ENCODE measurements at regions of chr1 and their contacts with region 1.

Region 1: GRCh38 chr1:154936555-154937084 is at the start of gene PMVK:
- DNase-seq: peak; percentile 92 to 97 (median 96)
- H3K4me3 ChIP-seq: peak within 1 kb of the TSS; percentile 57 to 100 (median 83)
- H3K27ac ChIP-seq: peak within 1 kb of the TSS; percentile 74 to 100 (median 99)
- H3K27me3 ChIP-seq: no peaks in the 10 kb centered on the region
- CTCF ChIP-seq: peak in 53 of 56 donors; percentile 25 to 73 (median 53)
- total RNA-seq, gene PMVK: 28.0 to 64.2 (median 44.6) TPM

Region 2: DNA sequence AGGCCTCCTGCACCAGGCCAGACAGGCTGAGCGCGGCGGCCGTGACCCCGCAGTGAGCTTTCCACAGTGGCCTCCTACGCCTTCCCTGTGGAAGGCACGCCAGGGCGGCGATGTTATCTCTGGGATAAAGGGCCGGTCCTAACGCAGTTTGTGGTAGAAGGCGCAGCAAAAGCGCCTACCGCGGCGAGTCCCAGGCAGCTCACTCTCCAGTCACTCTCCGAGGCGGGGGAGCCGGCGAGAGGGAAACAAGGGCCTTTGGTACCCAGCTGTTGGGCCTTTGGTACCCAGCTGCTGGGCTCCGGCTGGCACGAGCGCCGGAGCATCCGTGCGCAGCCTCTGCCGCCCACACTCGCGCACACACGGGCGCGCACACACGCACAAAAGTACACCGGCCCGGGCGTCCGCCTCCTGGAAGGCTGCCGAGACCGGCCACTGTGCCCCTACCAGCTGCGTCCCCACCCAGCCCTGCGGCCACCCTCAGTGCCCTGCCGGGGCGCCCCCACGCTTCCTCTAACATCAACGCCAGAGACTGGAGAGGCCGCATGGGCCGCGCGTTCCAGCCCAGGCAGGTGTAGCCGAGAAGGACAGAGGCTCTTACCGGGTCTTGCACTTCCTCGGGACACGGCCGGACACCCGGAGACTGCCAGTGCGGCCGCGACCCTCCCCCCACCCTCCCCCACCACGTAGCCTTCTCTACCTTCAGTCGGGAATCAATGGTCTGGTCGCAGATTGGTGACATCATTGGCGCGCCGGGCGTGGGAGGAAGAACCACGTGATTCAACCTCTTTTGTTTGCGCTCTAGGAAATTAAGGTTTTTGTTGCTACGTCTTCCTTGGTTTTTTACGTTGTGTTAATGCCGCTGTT is 309.1 kb before region 1 on chr1:
- intact Hi-C with region 1: loop called in 1 of 2 experiments (anchors 5 kb)
- DNase-seq: peak; percentile 77 to 92 (median 86)
- H3K4me3 ChIP-seq: peak overlapping the region; percentile 47 to 99 (median 95)
- H3K27ac ChIP-seq: peak overlapping the region; percentile 42 to 98 (median 91)
- H3K27me3 ChIP-seq: no peaks in the 10 kb centered on the region
- CTCF ChIP-seq: peak in 32 of 56 donors; percentile 3 to 55 (median 28)

Region 3: GRCh38 chr1:154669464-154670282 is 266.9 kb before region 1 on chr1:
- intact Hi-C with region 1: loop called in 1 of 2 experiments (anchors 5 kb)
- DNase-seq: peak; percentile 54 to 85 (median 80)
- H3K4me3 ChIP-seq: no peak overlapping the region
- H3K27ac ChIP-seq: no peak overlapping the region
- H3K27me3 ChIP-seq: no peaks in the 10 kb centered on the region
- CTCF ChIP-seq: peak; percentile 37 to 91 (median 78)

Region 4: DNA sequence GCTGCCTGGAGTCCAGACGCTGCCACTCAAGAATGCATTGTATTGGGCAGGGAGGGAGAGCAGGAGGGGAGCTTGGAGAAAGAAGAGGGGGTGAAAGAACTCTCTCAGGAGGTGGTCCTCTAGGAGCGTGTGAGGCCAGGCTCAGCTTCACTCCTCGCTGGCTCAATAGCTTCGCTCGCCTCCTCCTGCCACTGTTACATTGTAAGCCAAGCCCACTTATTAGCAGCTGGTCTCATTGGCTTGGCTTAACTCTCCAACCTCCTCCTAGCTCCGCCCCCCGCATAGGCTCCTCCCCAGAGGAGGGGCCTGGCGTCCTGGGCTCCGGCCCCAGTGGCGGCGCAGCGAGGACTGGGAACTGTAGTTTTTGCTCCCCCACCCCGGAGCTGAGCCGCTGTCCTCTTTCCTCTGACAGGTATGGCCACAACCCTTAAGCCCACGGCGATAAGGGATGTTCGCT is 66.5 kb before region 1 on chr1 and contains the start of gene KCNN3:
- intact Hi-C with region 1: loop called in 1 of 2 experiments (anchors 5 kb)
- DNase-seq: peak; percentile 82 to 96 (median 94)
- H3K4me3 ChIP-seq: peak within 1 kb of the TSS; percentile 40 to 81 (median 66)
- H3K27ac ChIP-seq: peak within 1 kb of the TSS in 44 of 59 donors; percentile 15 to 83 (median 62)
- H3K27me3 ChIP-seq: no peaks in the 10 kb centered on the region
- CTCF ChIP-seq: peak in 42 of 56 donors; percentile 12 to 66 (median 36)
- total RNA-seq, gene KCNN3: 14.9 to 97.0 (median 32.4) TPM

Region 5: DNA sequence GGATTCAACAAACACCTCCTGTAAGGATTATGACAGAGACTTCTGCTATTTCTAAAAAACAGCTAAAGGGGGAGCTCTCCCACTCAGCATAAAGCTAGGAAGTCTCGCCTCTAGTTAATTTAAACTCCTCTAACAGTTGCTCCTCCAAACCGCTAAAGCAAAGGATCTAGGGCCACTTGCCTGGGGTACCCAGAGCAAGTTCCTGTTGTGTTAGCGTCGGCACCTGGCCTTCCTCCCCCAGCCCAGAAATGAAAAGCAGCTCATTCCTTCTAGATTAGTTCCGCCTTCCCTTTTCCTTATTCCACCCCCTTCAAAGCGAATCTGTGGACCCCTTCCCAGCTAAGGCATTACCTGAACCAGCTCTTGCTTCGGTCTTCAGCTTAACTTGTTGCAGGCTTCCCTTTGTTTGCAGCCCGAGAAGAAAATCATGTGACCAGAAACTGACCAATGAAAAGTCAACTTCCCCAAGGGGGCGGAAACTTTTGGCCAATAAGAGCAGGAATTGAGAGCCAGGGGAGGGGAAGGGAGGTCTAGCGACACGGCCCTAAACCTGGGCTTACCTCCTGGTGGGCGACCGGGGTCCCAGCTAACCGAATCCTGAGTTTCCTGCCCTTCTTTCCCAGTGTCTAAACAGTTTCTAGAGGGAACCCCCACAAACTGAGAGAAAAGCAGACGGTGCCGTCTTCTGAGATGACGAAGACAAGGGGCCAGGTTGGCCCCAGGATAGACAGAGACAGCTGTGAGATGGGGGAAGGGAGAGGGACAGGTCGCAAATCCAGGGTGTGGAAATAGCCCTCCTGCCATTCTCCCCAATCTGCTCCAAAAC is 19.3 kb after region 1 on chr1 and contains the start of gene PBXIP1:
- intact Hi-C with region 1: loop called in 1 of 2 experiments (anchors 2 kb)
- DNase-seq: peak in 8 of 10 donors; percentile 52 to 82 (median 70)
- H3K4me3 ChIP-seq: peak within 1 kb of the TSS; percentile 37 to 88 (median 69)
- H3K27ac ChIP-seq: peak within 1 kb of the TSS; percentile 18 to 95 (median 84)
- H3K27me3 ChIP-seq: no peaks in the 10 kb centered on the region
- CTCF ChIP-seq: peak in 44 of 56 donors; percentile 4 to 50 (median 30)
- total RNA-seq, gene PBXIP1: 40.2 to 244 (median 96.9) TPM

Region 6: DNA sequence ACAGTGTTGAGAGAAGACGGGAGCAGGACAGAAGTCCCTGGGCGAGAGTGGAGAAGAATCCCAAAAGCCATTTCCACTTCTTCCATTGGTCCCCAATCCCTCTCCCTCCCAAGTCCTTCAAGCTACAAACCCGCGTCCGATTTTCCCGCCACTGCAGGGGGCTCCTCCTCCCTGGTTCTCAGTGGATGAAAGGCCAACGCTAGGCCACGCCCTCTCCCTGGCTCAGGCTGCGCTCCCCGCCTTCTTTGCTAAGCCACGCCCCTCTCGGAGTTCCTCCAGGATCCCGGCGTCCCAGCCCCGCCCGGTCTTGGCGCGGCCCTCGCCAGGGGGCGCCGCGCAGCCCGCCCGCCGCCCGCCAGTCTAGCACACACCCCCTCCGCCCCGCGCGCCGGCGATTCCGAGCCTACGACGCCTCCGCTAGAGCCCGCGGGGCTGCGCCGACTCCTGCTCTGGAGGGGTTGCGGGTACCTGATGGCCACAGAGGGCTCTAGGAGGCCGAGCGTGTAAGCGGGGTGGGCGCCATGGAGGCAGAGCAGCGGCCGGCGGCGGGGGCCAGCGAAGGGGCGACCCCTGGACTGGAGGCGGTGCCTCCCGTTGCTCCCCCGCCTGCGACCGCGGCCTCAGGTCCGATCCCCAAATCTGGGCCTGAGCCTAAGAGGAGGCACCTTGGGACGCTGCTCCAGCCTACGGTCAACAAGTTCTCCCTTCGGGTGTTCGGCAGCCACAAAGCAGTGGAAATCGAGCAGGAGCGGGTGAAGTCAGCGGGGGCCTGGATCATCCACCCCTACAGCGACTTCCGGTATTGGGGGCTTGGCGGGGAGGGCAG is 340.7 kb after region 1 on chr1 and contains the start of gene HCN3:
- intact Hi-C with region 1: no loop called
- DNase-seq: peak; percentile 97 to 99 (median 98)
- H3K4me3 ChIP-seq: peak within 1 kb of the TSS; percentile 48 to 94 (median 82)
- H3K27ac ChIP-seq: peak within 1 kb of the TSS in 54 of 59 donors; percentile 0 to 90 (median 73)
- H3K27me3 ChIP-seq: no peaks in the 10 kb centered on the region
- CTCF ChIP-seq: peak in 55 of 56 donors; percentile 53 to 95 (median 79)
- total RNA-seq, gene HCN3: 6.0 to 24.1 (median 11.7) TPM

Measured in dorsolateral prefrontal cortex (tissue), 120 donors.